ENCODE measurements at regions of chr10 and their contacts with region 1.

Region 1: DNA sequence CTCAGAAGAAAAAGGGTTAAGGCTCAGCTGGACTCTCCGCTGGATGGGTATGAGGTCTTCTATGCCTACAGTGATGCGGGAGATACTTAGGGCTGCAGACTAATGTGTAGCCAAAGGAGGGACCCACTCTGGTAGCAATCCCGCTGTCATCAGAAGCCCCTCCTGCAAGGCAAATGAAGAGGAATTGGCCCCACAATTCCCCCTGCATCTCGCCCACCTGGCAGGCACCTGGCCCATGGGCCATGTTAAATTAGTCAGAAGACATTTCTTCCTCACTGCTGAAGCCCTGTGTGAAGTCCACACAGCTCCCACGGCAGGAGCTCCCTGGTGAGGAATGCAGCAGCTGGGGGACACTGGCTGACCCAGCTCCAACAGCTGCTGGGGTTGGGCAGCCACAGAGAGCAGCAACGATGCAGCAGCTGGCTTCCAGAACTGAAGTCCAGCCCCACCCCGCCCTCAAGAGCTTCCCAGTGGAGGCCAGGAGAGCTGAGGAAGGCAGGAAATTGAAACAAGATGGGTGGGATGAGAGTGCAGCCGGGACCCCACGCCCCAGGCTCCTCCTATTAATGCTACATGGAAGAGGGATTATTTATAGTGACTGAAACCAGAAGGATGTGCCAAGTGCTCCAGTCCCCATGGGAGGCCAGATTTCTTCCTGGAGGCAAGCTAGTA is 5.5 kb downstream of the VSTM4 start:
- DNase-seq: peak; percentile 81 to 87
- ATAC-seq: peak; percentile 73 to 90 (median 78)
- H3K4me3 ChIP-seq: peak overlapping the region in 7 of 10 donors; percentile 5 to 25 (median 13)
- H3K27ac ChIP-seq: peak overlapping the region in 9 of 10 donors; percentile 36 to 72 (median 59)
- H3K4me1 ChIP-seq: peaks cover 11 to 100% (median 93%) of the 10 kb centered on the region in 9 donors
- H3K27me3 ChIP-seq: peaks cover 0 to 4% (median 0%) of the 10 kb centered on the region in 7 donors
- CTCF ChIP-seq: no peak

Region 2: GRCh38 chr10:48973065-48973464 is 136.7 kb before region 1 on chr10:
- intact Hi-C with region 1: no loop called
- DNase-seq: no peak
- ATAC-seq: no peak
- H3K4me3 ChIP-seq: no peak overlapping the region
- H3K27ac ChIP-seq: no peak overlapping the region
- H3K4me1 ChIP-seq: no peaks in the 10 kb centered on the region
- H3K27me3 ChIP-seq: no peaks in the 10 kb centered on the region
- CTCF ChIP-seq: no peak

Region 3: GRCh38 chr10:49009199-49009979 is 100.4 kb before region 1 on chr10:
- intact Hi-C with region 1: loop called in 5 of 10 experiments (anchors 5 to 10 kb)
- DNase-seq: no peak
- ATAC-seq: peak in 7 of 8 donors; percentile 14 to 62 (median 41)
- H3K4me3 ChIP-seq: no peak overlapping the region
- H3K27ac ChIP-seq: peak overlapping the region; percentile 61 to 89 (median 82)
- H3K4me1 ChIP-seq: peaks cover 7 to 73% (median 41%) of the 10 kb centered on the region in 9 donors
- H3K27me3 ChIP-seq: no peaks in the 10 kb centered on the region
- CTCF ChIP-seq: no peak

Region 4: GRCh38 chr10:49056356-49056755 is 53.4 kb before region 1 on chr10:
- intact Hi-C with region 1: loop called in 3 of 10 experiments (anchors 5 kb)
- DNase-seq: no peak
- ATAC-seq: peak in 1 of 8 donors; percentile 3
- H3K4me3 ChIP-seq: no peak overlapping the region
- H3K27ac ChIP-seq: no peak overlapping the region
- H3K4me1 ChIP-seq: peaks cover 5 to 60% (median 48%) of the 10 kb centered on the region in 9 donors
- H3K27me3 ChIP-seq: no peaks in the 10 kb centered on the region
- CTCF ChIP-seq: no peak

Region 5: GRCh38 chr10:49177391-49178355 is 67.9 kb after region 1 on chr10:
- intact Hi-C with region 1: loop called in 1 of 10 experiments (anchors 5 kb)
- DNase-seq: peak; percentile 60 to 87
- ATAC-seq: peak; percentile 91 to 97 (median 93)
- H3K4me3 ChIP-seq: peak overlapping the region in 1 of 10 donors; percentile 4
- H3K27ac ChIP-seq: peak overlapping the region; percentile 49 to 90 (median 81)
- H3K4me1 ChIP-seq: peaks cover 19 to 90% (median 63%) of the 10 kb centered on the region in 9 donors
- H3K27me3 ChIP-seq: no peaks in the 10 kb centered on the region
- CTCF ChIP-seq: no peak

Region 6: GRCh38 chr10:49280001-49280408 is 170.2 kb after region 1 on chr10:
- intact Hi-C with region 1: no loop called
- DNase-seq: no peak
- ATAC-seq: peak in 3 of 8 donors; percentile 22 to 38 (median 25)
- H3K4me3 ChIP-seq: no peak overlapping the region
- H3K27ac ChIP-seq: peak overlapping the region in 7 of 10 donors; percentile 15 to 87 (median 67)
- H3K4me1 ChIP-seq: peaks cover 3 to 48% (median 32%) of the 10 kb centered on the region in 9 donors
- H3K27me3 ChIP-seq: no peaks in the 10 kb centered on the region
- CTCF ChIP-seq: no peak